Activated CD4-positive, alpha-beta memory T cell treated with anti-CD3 and anti-CD28 coated beads, Interleukin-2, amount 10 ng/mL, durations not matched to agents 7 days and 5 days (primary cell): ENCODE measurements at regions of chr1 and their contacts with region 1.

Region 1: DNA sequence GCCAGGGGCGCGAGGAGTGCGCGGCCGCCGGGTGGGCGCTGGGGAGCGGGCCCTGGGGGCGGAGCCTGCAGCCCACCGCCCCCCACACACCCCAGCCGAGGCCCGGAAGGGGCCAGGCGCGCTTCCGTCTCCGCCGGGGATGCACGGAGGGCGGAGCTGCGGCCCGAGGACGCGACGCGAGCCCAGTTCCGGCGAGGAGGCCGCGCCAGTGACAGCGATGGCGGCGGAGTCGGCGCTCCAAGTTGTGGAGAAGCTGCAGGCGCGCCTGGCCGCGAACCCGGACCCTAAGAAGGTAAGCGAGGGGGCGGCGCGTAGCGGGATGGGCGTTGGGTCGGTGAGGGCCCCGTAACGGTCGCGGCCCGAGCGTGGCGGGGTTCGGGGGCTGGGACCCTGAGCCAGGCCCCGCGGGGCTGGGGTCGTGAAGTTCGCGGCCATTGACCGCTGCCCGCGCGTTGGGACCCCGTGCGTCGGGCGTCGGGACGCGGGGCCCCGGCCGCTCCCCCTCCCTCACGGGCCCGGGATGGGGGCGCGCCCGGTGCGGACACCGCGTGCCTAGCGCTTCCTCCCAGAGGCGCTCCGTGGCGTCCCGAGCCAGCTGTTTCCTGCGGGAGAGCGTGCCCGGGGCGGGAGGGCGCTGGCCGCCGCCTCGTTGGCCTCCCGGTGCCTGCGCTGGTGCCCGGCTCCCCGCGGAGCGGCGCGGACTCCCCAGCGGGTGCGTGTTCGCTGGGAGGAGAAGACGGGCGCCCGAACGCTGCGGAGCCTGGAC is at the start of gene ELOA:
- DNase-seq: peak; percentile 84
- H3K4me3 Mint-ChIP-seq: peak within 1 kb of the TSS; percentile 87
- H3K27ac Mint-ChIP-seq: peak within 1 kb of the TSS; percentile 87
- H3K4me1 Mint-ChIP-seq: peaks cover 44% of the 10 kb centered on the region
- H3K27me3 Mint-ChIP-seq: no peaks in the 10 kb centered on the region
- total RNA-seq, gene ELOA: 34.1 to 35.2 TPM

Region 2: GRCh38 chr1:23691499-23692307 is 51.8 kb before region 1 on chr1 and contains the start of gene RPL11:
- CTCF ChIA-PET with region 1: interaction called, 13 read pairs
- POLR2A ChIA-PET with region 1: interaction called, 62 read pairs
- DNase-seq: peak; percentile 89
- H3K4me3 Mint-ChIP-seq: peak within 1 kb of the TSS; percentile 94
- H3K27ac Mint-ChIP-seq: peak within 1 kb of the TSS; percentile 86
- H3K4me1 Mint-ChIP-seq: peaks cover 49% of the 10 kb centered on the region
- H3K27me3 Mint-ChIP-seq: no peaks in the 10 kb centered on the region
- total RNA-seq, gene RPL11: 1,074 to 1,084 TPM

Region 3: GRCh38 chr1:23732363-23733224 is 10.9 kb before region 1 on chr1:
- CTCF ChIA-PET with region 1: interaction called, 4 read pairs
- POLR2A ChIA-PET with region 1: interaction called, 10 read pairs
- DNase-seq: no peak
- H3K4me3 Mint-ChIP-seq: no peak overlapping the region
- H3K27ac Mint-ChIP-seq: no peak overlapping the region
- H3K4me1 Mint-ChIP-seq: peaks cover 16% of the 10 kb centered on the region
- H3K27me3 Mint-ChIP-seq: no peaks in the 10 kb centered on the region

Region 4: DNA sequence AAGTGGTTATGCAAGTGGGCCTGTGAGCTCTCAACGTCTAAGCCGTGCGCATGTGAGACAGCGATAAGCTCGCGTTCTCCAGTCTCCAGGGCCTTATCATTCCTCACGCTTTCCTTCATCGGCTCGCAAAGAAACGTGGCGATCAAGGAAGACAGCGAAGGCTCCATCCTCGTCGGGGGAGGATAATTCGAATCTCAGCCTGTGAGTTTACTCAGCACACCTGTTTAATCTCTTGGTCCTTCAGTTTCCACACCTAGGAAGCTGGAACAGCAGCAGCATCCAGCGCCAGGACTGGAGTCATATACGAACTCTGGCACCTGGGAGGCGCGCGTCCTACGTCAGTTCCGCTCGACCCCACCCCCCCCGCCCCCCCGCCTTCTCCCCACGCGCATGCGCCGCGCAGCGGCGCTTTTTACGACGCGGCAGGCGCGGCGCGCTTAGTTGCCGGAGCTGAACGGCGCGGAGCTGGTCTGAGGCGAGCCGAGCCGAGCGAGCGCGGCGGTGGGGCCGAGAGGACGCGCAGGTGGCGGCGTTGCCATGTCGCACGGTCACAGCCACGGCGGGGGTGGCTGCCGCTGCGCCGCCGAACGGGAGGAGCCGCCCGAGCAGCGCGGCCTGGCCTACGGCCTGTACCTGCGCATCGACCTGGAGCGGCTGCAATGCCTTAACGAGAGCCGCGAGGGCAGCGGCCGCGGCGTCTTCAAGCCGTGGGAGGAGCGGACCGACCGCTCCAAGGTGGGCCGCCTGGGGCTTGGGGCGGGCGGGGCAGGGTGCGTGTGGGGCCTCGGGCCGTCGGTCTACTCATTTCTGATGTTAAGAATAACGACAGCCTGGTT is 34.7 kb after region 1 on chr1 and contains the start of gene PITHD1:
- CTCF ChIA-PET with region 1: interaction called, 6 read pairs
- POLR2A ChIA-PET with region 1: interaction called, 23 read pairs
- DNase-seq: peak; percentile 85
- H3K4me3 Mint-ChIP-seq: peak within 1 kb of the TSS; percentile 83
- H3K27ac Mint-ChIP-seq: peak within 1 kb of the TSS; percentile 81
- H3K4me1 Mint-ChIP-seq: peaks cover 56% of the 10 kb centered on the region
- H3K27me3 Mint-ChIP-seq: no peaks in the 10 kb centered on the region
- total RNA-seq, gene PITHD1: 50.0 to 51.6 TPM

Region 5: DNA sequence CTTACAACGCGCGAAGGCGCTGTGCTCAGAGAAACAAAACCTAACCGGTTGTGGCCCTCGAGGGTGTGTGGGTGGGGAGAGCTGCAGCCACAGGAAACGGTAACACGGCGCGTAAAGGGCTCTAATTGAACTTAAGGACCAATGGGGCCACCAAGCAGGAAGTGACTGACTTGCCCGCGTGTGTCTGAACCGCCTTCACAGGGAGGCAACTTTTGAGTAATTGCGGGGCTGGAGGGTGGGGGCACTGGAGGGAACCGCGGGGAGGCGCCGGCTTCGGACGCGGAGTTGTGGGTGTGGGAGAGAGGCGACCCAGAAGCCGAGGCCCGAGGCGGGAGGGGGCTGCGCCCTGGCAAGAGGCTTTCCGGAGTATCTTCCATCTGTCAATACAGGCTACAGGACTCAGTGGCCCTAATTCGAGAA is 215.6 kb after region 1 on chr1:
- CTCF ChIA-PET with region 1: no interaction called
- POLR2A ChIA-PET with region 1: interaction called, 13 read pairs
- DNase-seq: peak; percentile 95
- H3K4me3 Mint-ChIP-seq: peak overlapping the region; percentile 100
- H3K27ac Mint-ChIP-seq: peak overlapping the region; percentile 100
- H3K4me1 Mint-ChIP-seq: peaks cover 55% of the 10 kb centered on the region
- H3K27me3 Mint-ChIP-seq: peaks cover 2% of the 10 kb centered on the region